PC-3 (cell line): ENCODE measurements at regions of chr14 and their contacts with region 1.

Region 1: GRCh38 chr14:105090493-105091053 is 25.3 kb upstream of the GPR132 start:
- DNase-seq: peak; percentile 94
- ATAC-seq: peak; percentile 13
- H3K4me3 ChIP-seq: no peak overlapping the region
- H3K27ac ChIP-seq: peak overlapping the region; percentile 61; the same call in 1 of the 2 replicates
- H3K4me1 ChIP-seq: peaks cover 49% of the 10 kb centered on the region
- H3K27me3 ChIP-seq: no peaks in the 10 kb centered on the region
- CTCF ChIP-seq: peak; percentile 98

Region 2: DNA sequence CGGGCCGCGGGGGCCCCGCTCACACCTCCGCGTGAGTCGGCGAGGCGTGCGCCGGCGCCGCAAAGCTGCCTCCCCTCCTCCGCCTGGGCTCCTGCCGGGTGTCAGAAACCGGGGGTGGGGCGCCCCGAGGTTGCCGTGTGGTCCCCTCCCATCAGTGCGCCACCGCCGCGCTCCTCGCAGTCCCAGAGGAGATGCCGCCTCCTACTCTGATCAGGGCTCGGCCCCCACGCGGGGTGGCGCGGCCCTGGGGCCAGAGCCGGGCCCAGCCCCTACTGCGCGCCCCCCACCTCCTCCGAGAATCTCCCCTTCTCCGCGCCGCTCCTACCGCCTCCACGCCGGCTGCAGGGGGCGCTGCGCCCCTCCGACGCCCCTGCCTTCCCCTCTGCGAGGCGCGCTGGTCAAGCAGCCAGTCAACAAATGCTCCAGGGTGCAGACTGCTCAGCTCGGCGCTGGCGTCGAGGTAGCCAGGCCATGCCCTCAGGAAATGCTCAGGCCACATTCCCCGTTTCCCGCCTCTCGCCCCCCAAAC is 78.5 kb after region 1 on chr14:
- CTCF ChIA-PET with region 1: interaction called, 3 read pairs
- POLR2A ChIA-PET with region 1: no interaction called
- intact Hi-C with region 1: loop called (anchors 5 kb)
- DNase-seq: no peak
- ATAC-seq: peak; percentile 3; the same call in 1 of the 2 replicates
- H3K4me3 ChIP-seq: peak overlapping the region; percentile 46
- H3K27ac ChIP-seq: no peak overlapping the region
- H3K4me1 ChIP-seq: peaks cover 21% of the 10 kb centered on the region
- H3K27me3 ChIP-seq: no peaks in the 10 kb centered on the region
- CTCF ChIP-seq: peak; percentile 51

Region 3: DNA sequence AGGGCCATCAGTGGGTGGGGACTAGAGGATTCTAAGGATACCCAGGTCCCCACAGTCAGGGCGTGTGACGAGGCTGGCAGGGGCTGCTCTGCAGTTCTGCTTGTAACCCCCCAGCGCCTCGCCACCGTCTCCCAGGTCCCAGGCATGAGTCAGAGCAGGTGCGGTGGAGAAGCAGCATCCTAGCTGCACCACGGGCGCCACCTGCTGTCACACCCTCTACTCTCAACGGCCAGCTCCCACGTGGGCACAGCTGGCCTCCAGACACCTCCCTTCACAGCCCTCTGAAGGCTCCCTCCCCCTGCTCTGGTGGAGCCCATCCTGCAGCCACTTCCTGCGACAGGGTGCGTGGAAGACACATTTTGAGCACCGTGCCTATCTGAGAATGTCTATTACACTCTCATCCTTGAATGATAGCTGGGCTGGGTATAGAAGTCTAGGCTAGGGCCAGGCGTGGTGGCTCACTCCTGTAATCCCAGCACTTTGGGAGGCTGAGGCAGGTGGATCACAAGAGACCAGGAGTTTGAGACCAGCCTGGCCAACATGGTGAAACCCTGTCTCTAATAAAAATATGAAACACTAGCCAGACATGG is 97.5 kb after region 1 on chr14:
- CTCF ChIA-PET with region 1: interaction called, 10 read pairs
- POLR2A ChIA-PET with region 1: no interaction called
- intact Hi-C with region 1: loop called (anchors 2 kb)
- DNase-seq: peak; percentile 65
- ATAC-seq: peak; percentile 70
- H3K4me3 ChIP-seq: no peak overlapping the region
- H3K27ac ChIP-seq: no peak overlapping the region
- H3K4me1 ChIP-seq: no peaks in the 10 kb centered on the region
- H3K27me3 ChIP-seq: no peaks in the 10 kb centered on the region
- CTCF ChIP-seq: peak; percentile 60

Region 4: DNA sequence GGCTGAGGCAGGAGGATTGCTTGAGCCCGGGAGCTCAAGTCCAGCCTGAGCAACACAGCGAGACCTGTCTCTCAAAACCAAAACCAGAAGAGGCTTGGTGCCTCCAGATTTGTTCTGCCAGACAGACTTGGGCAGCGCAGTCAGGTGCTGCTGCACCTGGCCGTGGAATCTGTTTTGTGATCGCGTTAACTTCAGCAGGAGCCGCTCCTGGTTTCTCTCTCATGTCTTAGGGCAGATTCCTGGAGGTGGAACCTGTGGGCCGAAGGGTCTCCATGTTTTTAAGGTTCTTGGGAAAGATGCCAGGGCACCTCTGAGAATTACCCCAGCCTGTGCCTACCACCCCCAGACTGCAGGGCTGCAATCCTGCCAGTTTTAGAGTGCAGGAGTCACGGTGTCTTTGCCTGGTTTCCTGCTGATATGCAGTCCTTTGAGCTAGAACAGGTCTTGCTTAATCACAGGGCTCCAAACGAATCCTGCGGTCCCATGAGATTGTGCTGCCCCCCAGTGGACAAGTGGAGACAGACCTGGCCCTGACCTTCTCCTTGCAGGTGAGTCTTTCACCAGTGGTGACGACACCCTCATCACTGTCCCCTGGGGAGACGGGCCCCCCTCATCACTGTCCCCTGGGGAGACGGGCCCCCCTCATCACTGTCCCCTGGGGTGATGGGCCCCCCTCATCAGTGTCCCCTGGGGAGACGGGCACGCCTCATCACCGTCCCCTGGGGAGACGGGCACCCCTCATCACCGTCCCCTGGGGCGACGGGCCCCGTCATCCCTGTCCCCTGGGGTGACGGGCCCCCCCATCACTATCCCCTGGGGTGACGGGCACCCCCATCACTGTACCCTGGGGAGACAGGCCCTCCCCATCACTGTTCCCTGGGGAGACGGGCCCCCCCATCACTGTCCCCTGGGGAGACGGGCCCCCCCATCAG is 261.6 kb after region 1 on chr14:
- CTCF ChIA-PET with region 1: no interaction called
- POLR2A ChIA-PET with region 1: no interaction called
- intact Hi-C with region 1: loop called (anchors 2 kb)
- DNase-seq: peak; percentile 92
- ATAC-seq: peak; percentile 98
- H3K4me3 ChIP-seq: no peak overlapping the region
- H3K27ac ChIP-seq: no peak overlapping the region
- H3K4me1 ChIP-seq: no peaks in the 10 kb centered on the region
- H3K27me3 ChIP-seq: no peaks in the 10 kb centered on the region
- CTCF ChIP-seq: peak; percentile 81

Region 5: DNA sequence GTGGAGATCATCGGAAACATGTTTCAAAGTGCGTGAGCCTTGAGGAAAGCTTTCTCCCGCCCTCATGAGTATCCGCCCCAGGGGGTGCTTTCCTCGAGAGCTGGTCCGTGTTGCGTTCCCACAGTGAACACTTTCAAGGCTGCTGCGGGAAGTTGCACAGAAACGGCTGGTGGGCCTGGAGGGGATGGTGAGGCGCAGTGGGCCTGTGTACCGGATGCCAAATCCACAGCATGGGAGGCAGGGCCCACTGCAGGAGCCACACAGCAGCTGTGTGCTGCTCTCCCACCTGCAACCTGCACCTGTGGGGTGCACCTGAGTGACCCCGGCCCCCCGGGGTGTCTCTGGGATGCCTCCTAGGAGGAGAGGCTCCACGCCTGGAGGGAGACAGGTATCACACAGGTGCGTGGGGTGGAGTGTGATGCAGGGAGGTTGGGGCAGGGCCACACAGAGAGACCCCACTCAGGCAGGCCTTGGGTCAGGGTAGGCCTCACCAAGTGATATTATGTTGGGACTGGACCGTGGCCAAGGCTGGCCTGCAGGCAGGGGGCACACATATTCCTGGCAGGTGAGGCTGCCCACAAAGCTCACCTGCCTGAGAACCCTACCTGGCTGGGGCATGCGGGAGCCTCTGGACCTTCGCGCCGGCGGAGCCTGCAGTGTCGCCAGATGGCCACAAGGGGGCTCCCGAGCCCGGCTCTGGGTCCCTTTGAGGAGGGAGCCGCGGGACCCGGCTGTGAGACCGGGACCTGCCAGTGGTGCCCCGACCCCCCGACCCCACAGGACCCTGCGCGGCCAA is 447.0 kb after region 1 on chr14:
- CTCF ChIA-PET with region 1: no interaction called
- POLR2A ChIA-PET with region 1: no interaction called
- intact Hi-C with region 1: no loop called
- DNase-seq: peak; percentile 55
- ATAC-seq: peak; percentile 87
- H3K4me3 ChIP-seq: no peak overlapping the region
- H3K27ac ChIP-seq: no peak overlapping the region
- H3K4me1 ChIP-seq: peaks cover 5% of the 10 kb centered on the region
- H3K27me3 ChIP-seq: peaks cover 15% of the 10 kb centered on the region
- CTCF ChIP-seq: peak; percentile 85